ENCODE measurements at regions of chr6 and their contacts with region 1.

Region 1: DNA sequence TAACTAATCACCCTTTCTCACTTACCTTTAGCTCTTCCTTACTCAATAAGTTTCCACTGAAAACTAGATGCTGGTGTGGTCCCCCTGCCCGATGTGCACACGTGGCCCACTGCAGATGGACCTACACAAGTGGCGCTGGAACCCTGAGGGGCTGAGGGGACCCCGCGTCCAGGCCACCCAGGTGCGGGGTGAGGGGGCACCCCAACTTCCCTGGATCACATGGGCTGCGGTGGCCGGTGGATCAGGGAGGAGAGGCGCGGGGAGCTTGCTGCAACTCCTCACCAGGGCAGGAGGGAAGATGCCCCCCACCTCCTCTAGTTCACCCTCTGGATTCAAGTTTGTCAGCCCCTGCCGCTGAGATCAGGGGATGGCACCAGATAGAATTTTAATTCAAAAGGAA is 12.5 kb upstream of the HLA-DOA start:
- DNase-seq: no peak
- H3K4me3 ChIP-seq: no peak overlapping the region
- H3K27ac ChIP-seq: no peak overlapping the region
- H3K4me1 ChIP-seq: peaks cover 12 to 15% of the 10 kb centered on the region in 2 donors
- H3K27me3 ChIP-seq: no peaks in the 10 kb centered on the region
- CTCF ChIP-seq: no peak
- POLR2A ChIP-seq: no peak

Region 2: DNA sequence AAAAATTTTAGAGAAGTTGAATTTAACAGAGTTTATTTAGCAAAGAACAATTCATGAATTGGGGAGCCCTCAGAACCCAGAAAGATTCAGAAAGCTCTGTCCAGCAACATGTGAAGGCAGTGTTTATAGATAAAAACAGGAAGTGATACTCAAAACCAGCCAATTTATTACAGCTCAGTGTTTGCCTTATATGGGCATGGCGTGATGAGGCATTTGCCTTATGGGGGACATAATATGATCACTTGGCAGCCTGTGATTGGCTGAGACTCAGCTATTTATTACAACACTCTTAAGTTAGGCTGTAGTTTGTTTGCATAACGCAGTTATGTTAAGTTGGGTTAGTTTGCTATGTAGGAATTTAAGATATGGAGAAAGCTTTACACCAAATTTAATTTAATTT is 40.1 kb after region 1 on chr6:
- intact Hi-C with region 1: no loop called
- DNase-seq: no peak
- H3K4me3 ChIP-seq: no peak overlapping the region
- H3K27ac ChIP-seq: no peak overlapping the region
- H3K4me1 ChIP-seq: no peaks in the 10 kb centered on the region
- H3K27me3 ChIP-seq: no peaks in the 10 kb centered on the region
- CTCF ChIP-seq: no peak
- POLR2A ChIP-seq: no peak

Region 3: DNA sequence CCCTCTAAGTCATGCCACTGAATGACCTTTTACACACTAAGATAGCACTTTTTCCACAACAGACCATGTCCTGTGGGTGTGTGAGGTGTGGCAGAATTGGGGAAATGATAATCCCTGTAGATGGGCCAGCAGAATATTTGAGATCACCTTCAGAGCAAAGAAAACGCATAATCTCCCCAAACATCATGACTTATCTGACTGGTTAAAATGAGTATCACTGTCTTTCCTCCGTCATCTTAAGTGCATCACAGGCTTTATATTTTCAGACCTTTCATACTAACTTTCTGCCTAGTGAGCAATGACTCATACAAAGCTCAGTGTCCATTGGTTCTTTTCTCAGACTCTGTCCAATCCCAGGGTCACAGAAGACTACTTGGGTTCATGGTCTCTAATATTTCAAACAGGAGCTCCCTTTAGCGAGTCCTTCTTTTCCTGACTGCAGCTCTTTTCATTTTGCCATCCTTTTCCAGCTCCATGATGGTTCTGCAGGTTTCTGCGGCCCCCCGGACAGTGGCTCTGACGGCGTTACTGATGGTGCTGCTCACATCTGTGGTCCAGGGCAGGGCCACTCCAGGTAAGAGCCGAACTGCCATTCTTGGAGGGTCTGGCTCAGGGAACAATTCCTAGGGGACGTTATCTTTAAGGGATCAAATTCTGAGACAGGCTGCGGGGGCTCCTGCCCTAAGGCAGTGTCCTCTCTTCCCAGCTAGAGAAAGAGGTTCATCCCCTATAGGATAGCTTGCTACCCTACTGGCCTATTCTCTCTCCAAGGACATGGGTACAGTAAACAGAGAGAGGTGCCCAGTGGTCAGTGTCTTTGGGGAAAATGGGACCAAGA is 53.9 kb after region 1 on chr6 and contains the start of gene HLA-DPB1:
- intact Hi-C with region 1: loop called (anchors 5 kb)
- DNase-seq: peak in 2 of 7 donors; percentile 51 to 61
- H3K4me3 ChIP-seq: peak within 1 kb of the TSS in 3 of 4 donors; percentile 4 to 47 (median 17)
- H3K27ac ChIP-seq: peak within 1 kb of the TSS; percentile 30 to 88 (median 70)
- H3K4me1 ChIP-seq: peaks cover 13 to 14% of the 10 kb centered on the region in 2 donors
- H3K27me3 ChIP-seq: no peaks in the 10 kb centered on the region
- CTCF ChIP-seq: no peak
- POLR2A ChIP-seq: peak; percentile 54 to 80
- total RNA-seq, gene HLA-DPB1: 10.8 to 521 (median 249) TPM

Region 4: DNA sequence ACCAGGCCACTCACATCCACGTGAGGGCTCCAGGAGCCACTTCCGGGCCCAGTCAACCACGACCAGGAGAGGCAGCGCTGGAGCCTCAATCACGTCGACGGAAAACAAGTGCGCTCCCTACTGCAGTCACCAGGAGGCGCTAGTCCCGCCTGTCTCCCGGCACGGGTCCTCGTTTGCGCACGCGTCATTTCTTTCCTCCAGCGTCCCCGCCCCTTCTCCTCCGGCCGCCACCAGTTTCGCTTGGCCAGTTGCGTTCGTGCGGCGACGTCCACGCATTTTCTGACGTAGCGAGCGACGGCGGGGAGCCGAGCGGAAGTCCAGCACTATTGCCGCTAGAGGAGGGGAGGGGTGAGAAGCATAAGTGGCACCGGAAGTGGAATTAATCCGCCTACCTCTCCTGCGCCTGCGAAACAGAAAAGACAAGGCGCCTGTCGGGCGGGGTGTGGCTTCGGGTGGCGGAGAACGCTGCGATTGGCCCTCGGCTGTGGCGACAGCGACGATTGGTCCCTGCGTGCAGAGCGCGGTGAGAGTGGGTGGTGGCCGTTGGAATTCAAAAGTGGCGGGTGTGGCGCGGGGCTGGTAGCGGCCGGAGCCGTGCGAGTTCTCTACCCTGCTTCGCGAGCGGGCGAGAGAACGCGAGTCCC is 369.5 kb after region 1 on chr6 and contains the start of gene KIFC1:
- intact Hi-C with region 1: no loop called
- DNase-seq: peak; percentile 99 to 100 (median 99)
- H3K4me3 ChIP-seq: peak within 1 kb of the TSS in 2 of 4 donors; percentile 24 to 48
- H3K27ac ChIP-seq: peak within 1 kb of the TSS in 4 of 5 donors; percentile 75 to 94 (median 84)
- H3K4me1 ChIP-seq: peaks cover 7 to 8% of the 10 kb centered on the region in 2 donors
- H3K27me3 ChIP-seq: no peaks in the 10 kb centered on the region
- CTCF ChIP-seq: peak; percentile 94 to 99 (median 97)
- POLR2A ChIP-seq: no peak
- total RNA-seq, gene KIFC1: 0.60 to 9.5 (median 1.7) TPM in 8 of 9 donors, not detected in the other

Measured in adrenal gland (tissue), 19 donors.